Right ventricle myocardium superior (tissue), 1 donor: ENCODE measurements at regions of chr3 and their contacts with region 1.

Region 1: DNA sequence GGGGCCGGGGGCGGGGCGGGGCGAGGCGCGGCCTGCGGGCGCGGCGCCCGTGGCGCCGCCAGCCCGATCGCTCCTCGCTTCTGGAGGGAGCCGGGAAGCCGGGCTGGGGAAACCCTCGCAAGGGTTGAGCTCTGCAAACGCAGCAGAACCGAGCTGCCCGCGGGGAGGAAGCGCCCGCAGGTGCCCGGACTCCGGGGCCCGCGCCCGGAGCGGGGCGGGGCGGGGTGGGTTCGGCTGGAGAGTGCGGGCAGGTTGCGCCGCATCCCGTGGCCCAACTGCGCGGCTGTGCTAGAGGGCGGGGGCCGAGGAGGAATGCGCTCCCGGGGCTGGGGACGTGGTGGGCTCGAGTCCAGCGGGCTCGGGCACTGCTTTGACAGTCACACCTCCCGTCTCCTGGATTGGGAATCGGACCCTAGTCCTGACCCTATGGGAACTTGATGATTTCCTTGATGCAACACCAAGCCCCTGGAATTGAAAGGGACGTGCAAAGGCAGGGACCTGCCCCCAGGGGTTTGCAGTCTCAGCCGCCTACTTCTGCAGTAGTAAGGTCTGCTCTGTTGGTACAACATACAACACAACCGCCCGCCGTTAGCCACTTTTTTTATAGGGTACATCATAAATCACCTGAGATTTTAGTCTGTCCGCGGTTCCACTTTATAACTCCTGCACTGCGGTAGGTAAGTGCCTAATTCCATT is 34.3 kb downstream of the ZBTB38 start:
- DNase-seq: peak; percentile 86
- ATAC-seq: peak; percentile 78

Region 2: DNA sequence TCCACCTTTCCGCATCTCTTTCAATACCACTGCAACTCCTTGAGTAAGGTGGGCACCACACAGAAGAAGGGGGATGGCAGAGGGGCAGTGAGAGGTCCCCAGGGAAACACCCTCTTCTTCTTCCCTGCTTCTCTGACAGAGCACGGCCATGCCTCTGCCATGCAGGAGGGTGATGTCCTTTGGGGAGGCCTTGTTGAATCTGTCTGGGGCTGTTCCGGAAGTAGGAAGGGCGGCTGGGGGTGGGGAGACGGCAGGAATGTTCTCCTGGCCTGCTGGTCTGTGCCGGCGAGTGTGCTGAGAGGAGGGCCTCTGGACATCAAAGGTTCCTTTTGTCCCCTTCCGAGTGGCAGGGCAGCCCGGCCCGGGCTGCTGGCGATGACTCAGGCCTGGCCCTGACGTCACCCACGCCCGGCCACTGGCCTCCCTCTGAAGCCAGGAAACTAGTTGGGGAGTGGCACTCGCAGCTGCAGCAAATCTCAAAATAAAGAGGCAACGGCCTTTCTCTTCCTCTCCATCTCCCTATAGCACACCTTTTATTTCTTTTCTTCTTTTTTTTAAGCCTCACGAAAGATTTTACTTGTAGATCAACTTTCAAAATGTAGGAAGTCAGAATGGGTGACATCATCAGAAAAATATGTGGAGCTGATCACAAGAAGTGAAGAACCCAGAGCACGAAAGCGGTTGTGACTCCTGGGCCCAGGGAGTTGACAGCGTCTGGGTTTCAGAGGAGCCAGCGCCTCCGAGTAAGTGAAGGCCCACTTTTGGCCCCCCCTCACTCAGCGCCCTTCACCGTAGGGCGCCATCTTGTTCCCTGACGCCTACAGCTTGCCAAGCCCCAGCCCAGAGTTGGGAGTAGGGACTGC is 34.3 kb before region 1 on chr3 and contains the start of gene ZBTB38:
- intact Hi-C with region 1: loop called (anchors 5 kb)
- DNase-seq: peak; percentile 93
- ATAC-seq: peak; percentile 90
- total RNA-seq, gene ZBTB38: 89.6 TPM

Region 3: DNA sequence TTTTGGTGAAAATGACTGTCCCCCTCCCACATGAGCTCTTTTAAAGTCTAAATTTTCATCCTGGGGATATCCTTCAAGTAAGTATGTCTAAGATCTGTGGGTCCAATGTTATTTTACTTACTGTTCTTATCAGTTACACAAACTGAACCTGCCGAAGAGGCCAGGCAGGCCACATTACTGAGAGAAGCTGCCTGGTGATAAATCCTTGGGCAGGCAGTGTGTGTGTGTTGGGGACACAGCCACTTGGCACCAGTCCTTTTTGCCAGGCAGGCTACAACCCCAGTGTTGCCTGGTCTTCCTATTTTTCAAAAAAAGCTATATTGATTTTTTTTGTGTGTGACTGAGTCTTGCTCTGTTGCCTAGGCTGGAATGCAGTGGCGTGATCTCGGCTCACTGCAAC is 33.6 kb after region 1 on chr3:
- intact Hi-C with region 1: loop called (anchors 5 kb)
- DNase-seq: no peak
- ATAC-seq: peak; percentile 64